Head of caudate nucleus (tissue), 42 donors: ENCODE measurements at regions of chr15 and their contacts with region 1.

Region 1: DNA sequence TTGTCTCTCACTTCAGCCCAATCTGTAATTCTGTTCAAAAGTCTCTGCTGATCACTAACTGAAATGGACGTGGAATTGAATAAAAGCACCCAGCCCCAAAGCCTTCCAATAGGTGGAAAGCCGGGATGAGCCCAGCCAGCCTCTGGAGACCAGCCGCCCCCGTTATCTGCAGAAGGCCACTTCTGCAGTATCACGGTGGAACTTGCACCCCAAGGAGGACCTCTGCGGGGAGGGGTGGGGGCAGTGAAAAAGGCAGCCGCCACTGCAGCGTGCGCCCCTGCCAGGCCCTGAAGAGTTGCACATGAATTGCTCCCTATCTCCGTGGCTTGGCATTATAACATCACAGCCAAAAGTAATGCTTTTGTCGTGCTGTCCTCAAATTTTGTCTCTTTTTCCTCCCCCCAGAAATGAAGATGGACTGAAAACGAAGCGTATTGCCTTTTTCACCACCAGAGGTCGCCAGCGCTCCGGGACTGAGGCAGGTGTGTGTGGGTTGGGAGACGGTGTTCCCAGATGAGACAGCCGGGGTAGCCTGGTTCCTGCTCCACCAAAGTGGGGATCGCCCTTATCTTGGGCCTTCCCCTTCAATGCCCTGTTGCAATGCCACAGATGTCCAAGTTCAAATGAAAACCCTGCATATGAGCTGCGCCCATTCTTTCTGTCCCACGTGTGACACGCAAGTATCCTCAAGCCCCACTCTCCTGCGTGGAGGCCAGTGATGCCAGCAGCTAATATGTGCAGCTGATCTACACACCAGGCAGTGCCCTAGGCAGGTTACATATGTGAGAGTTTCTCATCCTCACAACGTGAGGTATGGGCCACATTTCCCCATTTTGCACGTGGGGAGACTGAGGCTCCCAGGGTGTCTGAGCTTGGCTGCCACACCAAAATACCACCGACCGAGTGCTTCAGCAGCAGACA is 96.0 kb downstream of the LRRK1 start:
- DNase-seq: peak; percentile 59 to 93 (median 81)

Region 2: DNA sequence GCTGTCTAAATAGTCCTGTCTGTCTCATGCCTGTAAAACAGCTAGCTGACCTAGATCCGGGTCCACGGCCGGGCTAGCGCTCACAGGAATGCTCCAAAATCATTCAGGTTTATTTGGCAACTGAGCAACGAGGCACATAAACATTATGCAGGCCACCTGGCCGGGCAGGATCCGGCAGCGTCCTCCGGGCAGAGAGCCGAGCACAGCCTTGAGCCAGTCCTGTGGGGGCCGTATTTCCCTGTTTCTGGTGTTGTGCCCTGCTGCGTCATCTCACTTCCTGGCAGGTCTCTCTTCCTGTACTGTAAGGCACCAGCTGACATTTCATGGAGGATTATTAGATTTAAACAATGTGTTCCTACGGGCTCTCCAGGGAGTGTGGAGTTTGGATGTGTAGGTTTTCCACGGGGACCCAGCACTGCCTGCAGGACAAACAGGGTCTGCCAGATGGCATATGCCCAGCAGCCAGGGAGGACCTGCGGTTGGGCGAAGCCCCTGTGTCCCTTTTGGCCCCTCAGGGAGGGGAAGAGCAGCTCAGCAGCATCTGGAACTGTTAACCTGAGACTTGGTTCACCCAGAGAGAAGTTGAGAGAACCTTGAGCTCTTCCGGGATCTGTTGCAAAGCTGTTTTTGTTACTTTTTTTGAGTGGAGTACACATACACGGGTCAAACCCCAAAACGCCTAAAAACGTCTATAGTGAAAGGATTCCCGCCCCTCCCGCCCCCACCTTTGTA is 112.6 kb before region 1 on chr15:
- intact Hi-C with region 1: no loop called
- DNase-seq: peak in 5 of 42 donors; percentile 25 to 58 (median 29)

Region 3: GRCh38 chr15:101047301-101047781 is 32.2 kb after region 1 on chr15:
- intact Hi-C with region 1: no loop called
- DNase-seq: peak in 39 of 42 donors; percentile 19 to 82 (median 44)

Region 4: GRCh38 chr15:101258238-101259144 is 243.3 kb after region 1 on chr15:
- intact Hi-C with region 1: loop called (anchors 2 kb)
- DNase-seq: peak in 41 of 42 donors; percentile 41 to 89 (median 74)